ENCODE measurements at regions of chr16 and their contacts with region 1.

Region 1: GRCh38 chr16:17556276-17557052 is 85.7 kb upstream of the XYLT1 start:
- DNase-seq: peak; percentile 13
- ATAC-seq: peak; percentile 69; the same call in 1 of the 2 replicates
- H3K4me3 Mint-ChIP-seq: no peak overlapping the region
- H3K27ac Mint-ChIP-seq: no peak overlapping the region
- H3K4me1 Mint-ChIP-seq: peaks cover 5% of the 10 kb centered on the region; the same call in 1 of the 2 replicates
- H3K27me3 Mint-ChIP-seq: no peaks in the 10 kb centered on the region; the same call in 1 of the 2 replicates
- CTCF ChIP-seq: peak; percentile 55; the same call in 1 of the 2 replicates

Region 2: GRCh38 chr16:17511340-17511739 is 45.1 kb before region 1 on chr16:
- CTCF ChIA-PET with region 1: no interaction called
- POLR2A ChIA-PET with region 1: no interaction called
- DNase-seq: no peak
- ATAC-seq: no peak
- H3K4me3 Mint-ChIP-seq: no peak overlapping the region
- H3K27ac Mint-ChIP-seq: no peak overlapping the region
- H3K4me1 Mint-ChIP-seq: no peaks in the 10 kb centered on the region
- H3K27me3 Mint-ChIP-seq: peaks cover 8% of the 10 kb centered on the region
- CTCF ChIP-seq: no peak

Region 3: DNA sequence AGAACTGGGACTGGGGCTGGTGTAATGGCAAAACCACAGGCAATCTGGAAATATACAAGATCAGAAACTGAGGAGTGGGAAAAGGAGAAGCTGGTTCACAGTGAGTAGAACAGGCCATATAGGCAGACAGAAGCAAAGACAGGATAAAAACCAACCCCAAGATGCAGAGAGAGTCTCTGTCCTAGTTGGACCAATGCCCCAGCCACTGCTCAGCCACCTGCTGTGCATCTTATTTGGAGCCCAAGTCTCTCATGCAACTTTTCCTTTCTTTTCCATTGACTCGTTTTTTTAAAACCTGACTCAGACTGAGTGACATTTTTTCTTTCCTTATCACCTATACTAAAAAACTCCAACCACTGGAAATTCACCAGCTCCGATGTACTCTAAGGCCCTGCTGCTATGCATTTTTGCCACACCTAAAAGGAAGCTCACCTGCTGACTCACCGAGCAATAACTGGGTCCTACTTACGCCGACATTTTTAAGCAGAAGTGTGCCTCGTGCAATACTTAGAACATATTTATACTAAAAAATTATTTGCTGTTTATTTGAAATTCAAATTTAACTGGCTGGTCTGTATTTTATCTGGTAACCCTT is 15.1 kb after region 1 on chr16:
- CTCF ChIA-PET with region 1: interaction called, 10 read pairs
- POLR2A ChIA-PET with region 1: no interaction called
- DNase-seq: no peak
- ATAC-seq: no peak
- H3K4me3 Mint-ChIP-seq: no peak overlapping the region
- H3K27ac Mint-ChIP-seq: no peak overlapping the region
- H3K4me1 Mint-ChIP-seq: peaks cover 5% of the 10 kb centered on the region; the same call in 1 of the 2 replicates
- H3K27me3 Mint-ChIP-seq: peaks cover 4% of the 10 kb centered on the region; the same call in 1 of the 2 replicates
- CTCF ChIP-seq: no peak